Common myeloid progenitor, CD34-positive (primary cell): ENCODE measurements at regions of chr11 and their contacts with region 1.

Region 1: DNA sequence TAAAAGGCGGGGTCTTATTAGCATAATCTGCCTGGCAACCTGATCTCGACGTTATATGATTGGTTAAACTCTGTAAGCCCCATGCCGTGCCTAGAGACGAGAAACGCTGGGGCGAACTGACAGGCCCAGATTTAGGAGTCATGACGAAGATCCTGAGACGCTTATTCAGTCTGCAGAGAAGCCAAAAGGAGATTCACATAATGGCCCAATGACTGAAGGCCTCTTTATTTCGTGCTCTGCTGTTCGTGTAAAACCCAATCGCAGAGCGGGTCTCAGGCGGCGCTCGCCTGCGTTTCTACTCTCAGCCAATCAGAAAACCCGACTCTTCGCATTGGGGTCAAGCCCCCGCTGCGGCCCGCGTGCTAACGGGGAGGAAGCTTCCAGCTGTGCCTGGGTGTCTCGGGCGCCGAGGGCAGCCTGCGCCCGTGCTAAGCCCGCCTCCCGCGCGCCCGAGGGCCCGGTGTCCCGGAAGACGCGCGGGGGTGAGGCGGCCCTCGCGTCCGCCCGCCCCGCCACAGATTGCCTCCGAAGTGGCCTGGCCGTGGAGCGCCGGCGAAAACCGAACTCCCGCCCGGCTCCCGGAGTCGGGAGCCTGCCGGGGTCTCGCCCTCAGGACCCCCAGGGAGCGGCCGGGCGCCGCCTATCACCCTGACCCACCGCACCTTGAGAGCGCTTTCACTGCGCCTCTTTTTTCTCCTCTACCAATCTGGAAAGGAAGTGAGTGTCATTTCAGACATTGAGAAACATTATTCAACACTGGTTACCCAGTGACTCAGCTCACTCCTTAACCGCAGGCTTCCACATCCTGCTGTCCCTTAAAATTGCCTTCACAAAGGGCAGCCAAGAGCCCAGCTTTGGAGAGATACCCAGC is 446 bp upstream of the PRDM10 start:
- DNase-seq: peak; percentile 97 to 98 (median 98)
- H3K4me3 ChIP-seq: peak overlapping the region; percentile 70 to 94 (median 84)
- H3K27ac ChIP-seq: peak overlapping the region; percentile 99 to 100
- H3K4me1 ChIP-seq: peaks cover 7 to 46% (median 35%) of the 10 kb centered on the region in 4 experiments
- H3K27me3 ChIP-seq: no peaks in the 10 kb centered on the region

Region 2: GRCh38 chr11:129979046-129979605 is 24.0 kb before region 1 on chr11:
- CTCF ChIA-PET with region 1: no interaction called
- POLR2A ChIA-PET with region 1: no interaction called
- DNase-seq: no peak
- H3K4me3 ChIP-seq: no peak overlapping the region
- H3K27ac ChIP-seq: no peak overlapping the region
- H3K4me1 ChIP-seq: peaks cover 0 to 6% (median 2%) of the 10 kb centered on the region in 4 experiments
- H3K27me3 ChIP-seq: no peaks in the 10 kb centered on the region

Region 3: DNA sequence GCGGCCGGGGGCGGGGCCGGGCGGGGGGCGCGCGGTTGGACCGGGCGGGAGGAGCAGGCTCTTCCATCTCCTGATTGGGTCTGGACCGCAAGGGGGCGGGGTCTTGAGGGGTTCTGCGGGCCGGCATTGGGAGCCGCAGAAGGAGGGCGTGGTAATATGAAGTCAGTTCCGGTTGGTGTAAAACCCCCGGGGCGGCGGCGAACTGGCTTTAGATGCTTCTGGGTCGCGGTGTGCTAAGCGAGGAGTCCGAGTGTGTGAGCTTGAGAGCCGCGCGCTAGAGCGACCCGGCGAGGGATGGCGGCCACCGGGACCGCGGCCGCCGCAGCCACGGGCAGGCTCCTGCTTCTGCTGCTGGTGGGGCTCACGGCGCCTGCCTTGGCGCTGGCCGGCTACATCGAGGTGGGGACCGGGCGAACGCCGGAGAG is 66.6 kb after region 1 on chr11 and contains the start of gene APLP2:
- CTCF ChIA-PET with region 1: interaction called, 7 read pairs
- POLR2A ChIA-PET with region 1: interaction called, 30 read pairs
- DNase-seq: peak; percentile 98 to 99 (median 99)
- H3K4me3 ChIP-seq: peak within 1 kb of the TSS; percentile 75 to 99 (median 89)
- H3K27ac ChIP-seq: peak within 1 kb of the TSS; percentile 74 to 82
- H3K4me1 ChIP-seq: peaks cover under 1 to 35% (median 28%) of the 10 kb centered on the region in 4 experiments
- H3K27me3 ChIP-seq: no peaks in the 10 kb centered on the region